ENCODE measurements at regions of chr5 and their contacts with region 1.

Region 1: GRCh38 chr5:54944364-54944763 is 41.0 kb downstream of the ESM1 start:
- DNase-seq: peak; percentile 36
- H3K4me3 ChIP-seq: no peak overlapping the region
- H3K27ac ChIP-seq: no peak overlapping the region
- H3K4me1 ChIP-seq: no peaks in the 10 kb centered on the region
- H3K27me3 ChIP-seq: no peaks in the 10 kb centered on the region
- CTCF ChIP-seq: peak; percentile 76

Region 2: GRCh38 chr5:54753034-54753433 is 191.3 kb before region 1 on chr5:
- CTCF ChIA-PET with region 1: no interaction called
- POLR2A ChIA-PET with region 1: no interaction called
- intact Hi-C with region 1: no loop called
- DNase-seq: no peak
- H3K4me3 ChIP-seq: no peak overlapping the region
- H3K27ac ChIP-seq: no peak overlapping the region
- H3K4me1 ChIP-seq: no peaks in the 10 kb centered on the region
- H3K27me3 ChIP-seq: no peaks in the 10 kb centered on the region
- CTCF ChIP-seq: no peak

Region 3: GRCh38 chr5:55146543-55147151 is 202.3 kb after region 1 on chr5:
- CTCF ChIA-PET with region 1: interaction called, 15 read pairs
- POLR2A ChIA-PET with region 1: no interaction called
- intact Hi-C with region 1: loop called (anchors 2 kb)
- DNase-seq: peak; percentile 91
- H3K4me3 ChIP-seq: no peak overlapping the region
- H3K27ac ChIP-seq: no peak overlapping the region
- H3K4me1 ChIP-seq: no peaks in the 10 kb centered on the region
- H3K27me3 ChIP-seq: peaks cover 27% of the 10 kb centered on the region
- CTCF ChIP-seq: peak; percentile 94

Region 4: DNA sequence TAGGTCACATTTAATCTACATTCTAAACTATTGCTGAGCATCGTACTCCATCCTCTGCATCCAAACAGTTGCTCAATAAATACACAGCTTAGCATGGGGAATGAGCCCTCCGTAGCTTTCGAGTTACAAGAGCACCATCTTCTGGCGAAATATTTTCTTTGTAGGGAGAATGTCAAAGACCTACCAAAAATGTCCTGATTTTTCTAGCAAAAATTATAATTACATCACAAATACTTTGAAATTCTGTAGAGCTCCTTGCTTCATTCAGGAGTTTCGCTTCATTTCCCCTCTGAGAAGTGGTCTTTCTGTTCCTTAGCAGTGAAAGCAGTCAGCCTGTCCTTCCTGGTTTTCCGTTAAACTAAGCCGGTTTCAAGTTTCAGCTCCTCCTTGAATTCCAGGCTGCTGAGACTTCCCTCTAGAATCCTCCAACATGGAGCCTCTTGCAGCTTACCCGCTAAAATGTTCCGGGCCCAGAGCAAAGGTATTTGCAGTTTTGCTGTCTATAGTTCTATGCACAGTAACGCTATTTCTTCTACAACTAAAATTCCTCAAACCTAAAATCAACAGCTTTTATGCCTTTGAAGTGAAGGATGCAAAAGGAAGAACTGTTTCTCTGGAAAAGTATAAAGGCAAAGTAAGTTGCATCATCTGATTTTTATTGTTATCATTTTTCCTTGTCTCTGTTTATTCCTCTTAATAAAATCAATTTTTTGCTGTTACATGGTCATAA is 215.6 kb after region 1 on chr5 and contains the start of gene GPX8:
- CTCF ChIA-PET with region 1: interaction called, 23 read pairs
- POLR2A ChIA-PET with region 1: no interaction called
- intact Hi-C with region 1: no loop called
- DNase-seq: peak; percentile 89
- H3K4me3 ChIP-seq: peak within 1 kb of the TSS; percentile 62
- H3K27ac ChIP-seq: peak within 1 kb of the TSS; percentile 87
- H3K4me1 ChIP-seq: peaks cover 6% of the 10 kb centered on the region
- H3K27me3 ChIP-seq: no peaks in the 10 kb centered on the region
- CTCF ChIP-seq: peak; percentile 83
- total RNA-seq, gene GPX8: 52.2 and 54.7 TPM in 2 replicates